Astrocyte of the cerebellum (primary cell): ENCODE measurements at regions of chr11 and their contacts with region 1.

Region 1: GRCh38 chr11:12159351-12160099 is 49.1 kb downstream of the MICAL2 start:
- DNase-seq: peak; percentile 69
- H3K4me3 ChIP-seq: no peak overlapping the region
- CTCF ChIP-seq: no peak

Region 2: GRCh38 chr11:12043959-12044819 is 115.3 kb before region 1 on chr11:
- in situ Hi-C with region 1: no loop called
- DNase-seq: peak; percentile 95
- H3K4me3 ChIP-seq: peak overlapping the region; percentile 6
- CTCF ChIP-seq: peak; percentile 83

Region 3: GRCh38 chr11:12224537-12224893 is 65.0 kb after region 1 on chr11:
- in situ Hi-C with region 1: loop called (anchors 10 kb)
- DNase-seq: peak; percentile 96
- H3K4me3 ChIP-seq: no peak overlapping the region
- CTCF ChIP-seq: no peak